ENCODE measurements at regions of chr4 and their contacts with region 1.

Region 1: DNA sequence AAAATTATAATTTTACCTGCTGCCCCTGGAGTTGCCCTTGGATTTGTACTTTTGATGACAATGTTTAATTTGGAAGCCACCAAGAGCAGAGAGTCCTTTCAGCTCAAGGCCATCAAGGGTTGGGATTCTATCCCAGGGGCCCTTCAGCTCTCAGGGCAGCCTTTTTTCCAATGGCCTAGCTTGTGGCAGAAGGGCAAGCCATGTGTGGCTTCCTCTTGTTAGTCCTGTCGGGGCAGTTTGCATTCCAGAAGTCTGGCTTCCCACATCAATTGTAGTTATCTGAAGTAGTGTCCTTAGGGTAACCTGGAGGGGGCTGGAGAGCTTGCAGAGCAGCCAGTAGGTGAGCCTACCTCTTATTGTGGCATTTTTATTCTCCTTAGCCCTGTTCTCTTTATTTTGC is 569.4 kb downstream of the TRAM1L1 start:
- DNase-seq: no peak
- ATAC-seq: no peak
- H3K4me3 ChIP-seq: no peak overlapping the region
- H3K27ac ChIP-seq: no peak overlapping the region
- H3K4me1 ChIP-seq: no peaks in the 10 kb centered on the region
- H3K27me3 ChIP-seq: no peaks in the 10 kb centered on the region
- CTCF ChIP-seq: no peak
- EP300 ChIP-seq: no peak
- POLR2A ChIP-seq: no peak
- RAD21 ChIP-seq: no peak

Region 2: DNA sequence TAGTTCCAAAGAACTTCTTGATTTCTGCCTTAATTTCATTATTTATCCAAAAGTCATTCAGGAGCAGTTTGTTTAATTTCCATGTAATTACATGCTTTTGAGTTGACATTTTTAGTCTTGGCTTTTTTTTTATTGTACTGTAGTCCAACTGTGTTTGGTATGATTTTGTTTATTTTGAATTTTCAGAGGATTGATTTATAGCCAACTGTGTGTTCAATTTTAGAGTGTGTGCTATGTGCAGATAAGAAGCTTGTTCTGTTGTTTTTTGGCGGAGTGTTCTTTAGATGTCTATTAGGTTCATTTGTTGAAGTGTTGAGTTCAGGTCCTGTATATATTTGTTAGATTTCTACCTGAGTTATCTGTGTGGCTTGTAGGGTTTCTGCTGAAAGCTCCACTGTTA is 35.8 kb after region 1 on chr4:
- CTCF ChIA-PET with region 1: no interaction called
- POLR2A ChIA-PET with region 1: no interaction called
- in situ Hi-C with region 1: no loop called
- intact Hi-C with region 1: loop called (anchors 1 kb)
- DNase-seq: no peak
- ATAC-seq: no peak
- H3K4me3 ChIP-seq: no peak overlapping the region
- H3K27ac ChIP-seq: no peak overlapping the region
- H3K4me1 ChIP-seq: no peaks in the 10 kb centered on the region
- H3K27me3 ChIP-seq: no peaks in the 10 kb centered on the region
- CTCF ChIP-seq: no peak
- EP300 ChIP-seq: no peak
- POLR2A ChIP-seq: no peak
- RAD21 ChIP-seq: no peak